Activated naive CD4-positive, alpha-beta T cell treated with anti-CD3 and anti-CD28 coated beads, Interleukin-2, amount 10 ng/mL, durations not matched to agents 7 days and 5 days (primary cell): ENCODE measurements at regions of chr1 and their contacts with region 1.

Region 1: DNA sequence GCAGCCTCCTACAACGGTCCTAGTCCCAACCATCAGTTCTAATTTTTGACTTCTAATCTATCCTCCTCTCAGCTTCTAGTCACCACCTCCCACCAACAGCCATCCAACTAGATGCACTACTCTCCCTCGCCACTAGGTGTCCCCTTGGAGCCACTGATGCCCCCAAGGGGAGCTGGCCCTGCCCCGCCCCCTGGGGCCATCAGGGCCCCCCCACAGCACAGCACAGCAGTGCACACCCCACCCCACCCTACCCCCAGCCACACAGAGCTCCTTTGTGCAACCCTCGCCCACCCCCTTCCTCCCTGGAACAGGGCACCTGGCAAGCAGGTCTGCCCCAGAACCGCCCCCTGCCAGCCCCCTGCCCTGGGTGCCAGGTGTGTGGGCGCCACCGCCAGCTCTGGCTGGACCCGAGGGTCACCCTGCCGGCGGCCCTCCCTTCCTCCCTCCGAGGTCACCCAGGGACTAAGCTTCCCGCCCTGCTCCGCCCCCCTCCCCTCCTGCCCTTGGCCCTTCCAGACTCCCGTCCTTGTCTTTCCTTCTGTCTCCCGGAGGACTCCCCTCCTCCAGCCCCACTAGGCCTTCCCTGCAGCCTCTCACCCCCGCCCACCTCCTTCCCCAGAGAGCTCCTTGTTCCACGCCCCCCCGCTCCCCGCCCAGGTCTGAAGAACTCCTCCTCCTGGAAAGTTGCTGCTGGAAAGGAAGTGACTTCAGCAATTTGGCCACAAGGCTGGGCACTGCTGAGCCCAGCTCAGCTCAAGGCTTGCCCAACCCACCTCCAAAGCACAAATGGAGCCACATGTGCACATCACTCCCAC is 47.0 kb downstream of the AHDC1 start:
- DNase-seq: peak; percentile 83
- H3K4me3 Mint-ChIP-seq: peak overlapping the region; percentile 48
- H3K27ac Mint-ChIP-seq: peak overlapping the region; percentile 84
- H3K4me1 Mint-ChIP-seq: peaks cover 35% of the 10 kb centered on the region
- H3K27me3 Mint-ChIP-seq: no peaks in the 10 kb centered on the region

Region 2: DNA sequence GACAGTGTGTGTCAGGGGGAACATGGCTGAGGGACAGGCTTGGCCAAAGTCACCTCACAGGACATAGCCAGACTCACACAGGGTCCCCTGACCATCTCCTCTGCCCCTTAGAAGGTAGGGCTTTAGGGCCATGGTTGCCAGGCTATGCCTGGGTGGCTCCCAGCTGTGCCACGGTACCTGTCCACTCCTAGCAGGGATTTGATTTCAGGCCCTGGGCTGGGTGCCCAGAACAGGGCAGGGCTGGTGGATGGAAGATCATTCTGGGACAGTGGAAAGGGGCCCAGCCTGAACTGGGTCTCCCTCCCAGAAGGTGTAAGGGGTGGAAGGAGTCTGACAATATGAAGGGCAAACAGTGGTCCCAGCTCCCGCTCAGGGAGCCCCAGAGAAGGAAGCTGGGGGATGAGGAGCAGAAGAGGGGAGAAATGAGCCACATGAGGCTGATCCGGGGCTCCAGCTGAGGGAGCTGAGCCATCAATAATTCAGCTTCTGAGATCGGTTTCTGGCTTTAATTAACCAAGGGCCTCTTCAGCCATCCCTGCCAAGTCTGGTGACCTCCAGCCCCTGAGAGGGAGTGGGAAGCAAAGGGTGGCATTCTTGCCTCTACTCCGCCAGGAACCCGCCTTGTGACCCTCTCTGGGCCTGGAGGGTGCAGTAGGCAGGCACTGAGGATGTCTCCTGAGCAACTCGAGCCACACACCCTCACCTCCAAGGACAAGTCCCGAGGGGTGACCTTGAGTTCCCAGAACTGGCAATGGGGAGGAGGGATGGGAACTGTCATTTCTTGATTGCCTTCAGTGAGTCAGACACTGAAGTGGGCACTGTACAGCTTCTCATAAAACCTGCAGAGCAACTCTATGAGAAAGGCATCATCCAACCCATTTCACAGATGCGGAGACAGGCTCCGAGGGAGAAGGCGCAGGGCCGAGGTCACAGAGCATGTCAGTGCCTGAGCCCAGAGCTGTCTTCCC is 175.9 kb before region 1 on chr1:
- CTCF ChIA-PET with region 1: no interaction called
- DNase-seq: no peak
- H3K4me3 Mint-ChIP-seq: no peak overlapping the region
- H3K27ac Mint-ChIP-seq: no peak overlapping the region
- H3K4me1 Mint-ChIP-seq: no peaks in the 10 kb centered on the region
- H3K27me3 Mint-ChIP-seq: peaks cover 40% of the 10 kb centered on the region

Region 3: GRCh38 chr1:27445177-27445936 is 111.6 kb before region 1 on chr1:
- CTCF ChIA-PET with region 1: no interaction called
- DNase-seq: no peak
- H3K4me3 Mint-ChIP-seq: no peak overlapping the region
- H3K27ac Mint-ChIP-seq: no peak overlapping the region
- H3K4me1 Mint-ChIP-seq: peaks cover 31% of the 10 kb centered on the region
- H3K27me3 Mint-ChIP-seq: no peaks in the 10 kb centered on the region

Region 4: DNA sequence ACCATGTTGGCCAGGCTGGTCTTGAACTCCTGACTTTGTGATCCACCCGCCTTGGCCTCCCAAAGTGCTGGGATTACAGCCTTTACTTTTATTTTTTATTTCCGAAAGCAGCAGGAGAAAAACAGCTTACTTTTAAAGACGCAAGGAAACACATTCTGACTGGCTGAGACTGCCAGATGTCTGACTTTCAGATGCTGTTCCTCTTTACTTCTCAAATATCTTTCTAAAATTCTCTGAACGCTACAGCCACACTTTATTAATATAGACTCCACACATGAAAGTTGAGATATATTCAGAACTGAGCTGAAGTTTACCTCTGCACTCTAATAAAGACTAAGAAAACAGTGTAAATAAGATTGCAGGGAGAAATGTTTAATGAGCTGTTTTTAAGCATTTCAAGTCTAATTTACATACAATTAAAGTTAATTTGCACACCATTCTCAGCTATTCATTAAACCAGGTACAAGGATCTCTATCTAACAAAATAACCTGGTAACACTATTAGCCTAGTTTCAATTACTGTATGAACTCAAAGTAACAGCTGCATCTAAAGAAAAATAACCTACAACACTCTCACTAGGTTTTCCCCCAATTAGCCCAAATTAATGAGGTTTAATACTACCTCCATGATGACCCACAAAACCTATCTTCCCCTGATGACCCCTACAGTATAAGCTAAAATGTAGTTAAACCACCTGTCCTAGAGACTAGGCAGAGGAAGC is 91.9 kb before region 1 on chr1:
- CTCF ChIA-PET with region 1: no interaction called
- DNase-seq: no peak
- H3K4me3 Mint-ChIP-seq: no peak overlapping the region
- H3K27ac Mint-ChIP-seq: no peak overlapping the region
- H3K4me1 Mint-ChIP-seq: peaks cover 19% of the 10 kb centered on the region
- H3K27me3 Mint-ChIP-seq: no peaks in the 10 kb centered on the region

Region 5: DNA sequence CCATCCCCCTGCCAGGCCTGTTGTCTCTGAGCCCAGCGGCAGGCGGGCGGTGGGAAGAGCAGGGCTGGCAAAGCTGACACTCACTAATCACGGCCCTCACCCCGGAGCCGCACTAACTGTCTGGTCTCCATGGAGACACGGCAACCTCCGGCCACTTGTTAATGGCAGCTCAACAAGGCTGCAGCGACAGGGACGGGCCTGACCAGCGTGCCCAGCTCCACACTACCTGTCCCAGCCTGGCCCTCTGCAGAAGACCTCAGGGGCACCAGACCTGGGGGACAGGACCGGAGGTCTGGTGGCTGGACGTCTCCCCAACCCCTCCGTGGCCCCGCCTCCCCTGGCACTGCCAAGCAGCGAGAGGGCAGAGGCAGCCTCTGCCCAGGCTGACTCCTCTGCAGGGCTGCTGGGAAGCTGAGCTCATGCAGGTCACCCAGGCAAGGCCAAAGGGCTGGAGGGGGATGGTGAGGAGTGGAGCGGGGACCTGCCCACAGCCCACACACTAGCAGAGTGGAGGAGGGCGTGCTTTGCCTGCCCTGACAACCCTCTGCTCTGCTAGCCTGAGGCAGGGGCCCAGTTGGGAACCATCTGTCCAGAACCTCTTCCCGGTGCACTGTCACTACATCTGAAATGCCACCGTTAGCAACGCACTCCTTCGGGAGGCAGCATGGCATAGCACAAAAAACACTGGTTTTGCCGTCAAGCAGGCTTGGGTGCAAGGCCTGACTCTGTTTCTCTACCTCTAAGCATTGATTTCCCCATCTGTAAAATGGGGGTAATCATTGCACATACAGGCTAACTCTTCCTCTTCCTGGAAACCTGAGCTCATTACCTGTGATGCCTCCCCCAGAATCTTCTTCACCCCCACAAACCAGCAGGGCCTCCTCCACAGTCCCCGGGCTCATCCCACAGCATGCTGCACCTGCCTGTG is 37.4 kb before region 1 on chr1:
- CTCF ChIA-PET with region 1: interaction called, 35 read pairs
- DNase-seq: no peak
- H3K4me3 Mint-ChIP-seq: no peak overlapping the region
- H3K27ac Mint-ChIP-seq: no peak overlapping the region
- H3K4me1 Mint-ChIP-seq: peaks cover 63% of the 10 kb centered on the region
- H3K27me3 Mint-ChIP-seq: peaks cover 4% of the 10 kb centered on the region

Region 6: GRCh38 chr1:27542408-27543273 is 14.3 kb before region 1 on chr1:
- CTCF ChIA-PET with region 1: interaction called, 10 read pairs
- DNase-seq: no peak
- H3K4me3 Mint-ChIP-seq: no peak overlapping the region
- H3K27ac Mint-ChIP-seq: no peak overlapping the region
- H3K4me1 Mint-ChIP-seq: peaks cover 24% of the 10 kb centered on the region
- H3K27me3 Mint-ChIP-seq: no peaks in the 10 kb centered on the region

Region 7: DNA sequence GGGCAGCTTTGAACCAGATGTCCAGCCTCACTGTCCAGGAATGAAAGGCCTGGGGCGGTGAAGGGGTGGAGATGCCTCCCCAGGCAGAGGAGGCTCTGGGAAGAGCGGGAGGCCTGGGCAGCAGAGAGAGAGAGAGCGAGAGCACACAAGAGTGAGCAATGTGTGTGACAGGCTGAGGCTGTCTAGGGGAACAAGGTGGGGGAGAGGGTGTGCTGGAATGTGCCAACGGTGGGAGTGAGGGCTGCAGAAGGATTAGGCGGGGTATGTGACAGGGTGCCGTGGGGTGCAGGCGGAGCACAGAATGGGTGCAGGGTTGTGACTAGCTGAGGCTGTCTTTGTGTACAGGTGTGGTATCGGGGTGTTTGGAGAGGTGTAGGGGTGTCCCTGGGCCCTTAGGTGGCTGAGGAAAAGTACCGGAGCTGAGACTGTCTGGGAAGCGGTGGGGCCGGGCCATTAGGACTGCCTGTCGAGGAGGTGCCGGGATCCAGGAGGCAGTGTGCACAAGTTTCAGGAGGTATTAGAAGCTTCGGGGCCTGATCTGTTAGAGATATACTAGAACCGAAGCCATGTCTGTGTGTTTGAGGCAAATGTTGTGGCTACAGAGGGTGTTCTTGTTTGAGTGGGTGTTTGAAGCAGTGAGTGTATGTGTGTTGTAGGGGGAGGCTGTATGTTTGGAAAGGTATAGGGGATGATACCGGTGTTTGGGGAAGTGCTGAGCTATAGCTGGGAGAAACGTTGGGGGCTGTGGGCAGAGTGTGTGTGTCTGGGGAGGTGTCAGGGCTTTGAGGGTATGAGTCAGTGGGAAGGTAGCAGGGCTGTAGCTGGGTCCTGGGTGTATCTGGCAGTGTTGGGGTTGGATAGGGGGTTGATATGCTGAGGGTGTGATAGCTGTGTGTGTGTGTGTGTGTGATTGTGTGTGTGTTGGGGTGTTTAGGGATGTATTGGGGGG is 37.8 kb after region 1 on chr1:
- CTCF ChIA-PET with region 1: interaction called, 19 read pairs
- DNase-seq: no peak
- H3K4me3 Mint-ChIP-seq: no peak overlapping the region
- H3K27ac Mint-ChIP-seq: no peak overlapping the region
- H3K4me1 Mint-ChIP-seq: peaks cover 32% of the 10 kb centered on the region
- H3K27me3 Mint-ChIP-seq: peaks cover 2% of the 10 kb centered on the region

Region 8: DNA sequence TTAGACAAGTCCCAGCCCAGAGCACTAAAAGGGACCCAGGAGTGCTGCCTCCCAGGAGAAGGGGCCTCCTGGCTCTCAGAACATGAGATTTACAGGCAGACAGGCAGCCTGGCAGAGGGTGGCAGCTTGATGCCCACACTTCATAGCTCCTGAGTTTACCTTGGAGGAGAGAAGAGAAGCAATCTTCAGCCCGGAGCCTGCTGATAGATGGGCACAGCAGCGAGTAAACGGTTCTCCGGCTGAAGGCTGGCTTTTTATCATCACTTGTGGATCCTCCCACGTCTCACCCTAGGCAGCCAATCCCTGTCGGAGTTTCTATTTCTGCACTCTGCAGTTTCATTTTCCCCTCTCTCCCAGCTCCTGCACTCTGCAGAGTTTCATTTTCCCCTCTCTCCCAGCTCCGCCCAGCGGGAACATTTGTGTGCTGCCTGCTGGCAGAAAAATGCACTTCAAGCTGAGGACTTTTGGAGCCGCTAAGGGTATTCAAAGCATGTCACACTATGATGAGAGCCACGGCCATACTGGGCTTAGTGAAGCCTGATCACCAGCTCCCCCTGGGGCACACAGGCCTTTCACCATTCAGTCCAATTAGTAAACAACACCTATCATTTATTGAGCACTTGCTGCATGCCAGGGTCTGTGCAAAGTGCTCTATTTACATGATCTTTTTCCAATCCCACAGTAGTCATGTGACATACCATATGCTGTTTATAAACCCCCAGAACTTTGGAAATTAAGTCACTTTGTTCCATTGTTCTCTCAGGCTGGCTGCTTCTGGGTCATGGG is 115.2 kb after region 1 on chr1 and contains the start of gene IFI6:
- CTCF ChIA-PET with region 1: interaction called, 14 read pairs
- DNase-seq: peak; percentile 91
- H3K4me3 Mint-ChIP-seq: peak within 1 kb of the TSS; percentile 88
- H3K27ac Mint-ChIP-seq: peak within 1 kb of the TSS; percentile 95
- H3K4me1 Mint-ChIP-seq: peaks cover 43% of the 10 kb centered on the region
- H3K27me3 Mint-ChIP-seq: no peaks in the 10 kb centered on the region

Region 9: DNA sequence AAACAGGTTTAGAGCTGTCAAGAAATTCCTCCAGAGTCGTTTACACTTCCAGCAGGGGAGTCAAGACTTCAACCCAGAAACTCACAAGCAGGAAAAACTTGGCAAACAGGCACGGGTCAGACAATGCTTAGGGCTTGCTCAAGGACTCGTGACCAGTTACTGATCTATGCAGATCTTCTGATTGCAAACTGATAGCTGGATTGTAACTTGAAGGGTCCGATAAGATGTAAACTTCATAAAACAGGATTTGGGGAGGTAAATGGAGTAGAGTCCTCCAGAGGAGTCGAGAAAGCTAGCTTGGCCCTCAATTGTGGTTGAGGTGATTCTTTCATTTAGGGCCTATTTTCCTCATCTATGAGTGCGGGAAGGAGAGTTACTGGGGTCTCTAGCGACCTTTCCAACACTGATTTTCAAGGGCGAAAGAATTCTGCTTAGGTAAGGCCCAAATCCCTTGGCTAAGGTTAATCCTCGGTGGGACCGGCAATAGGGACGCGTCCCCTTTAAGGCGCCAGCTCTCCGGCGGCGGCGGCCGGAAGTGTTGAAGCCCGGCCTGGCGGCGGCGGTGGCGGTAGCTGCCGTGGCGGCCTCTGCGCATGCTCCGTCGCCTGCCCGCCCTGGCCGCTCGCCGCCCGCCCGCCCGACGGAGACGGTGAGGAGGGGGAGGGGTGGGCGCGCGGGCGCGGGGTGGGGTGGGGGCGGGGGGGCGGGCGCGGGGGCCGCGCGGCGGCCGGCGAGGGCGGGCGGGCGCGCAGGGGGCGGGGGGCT is 1111.4 kb after region 1 on chr1 and contains the start of gene GMEB1:
- CTCF ChIA-PET with region 1: no interaction called
- DNase-seq: peak; percentile 90
- H3K4me3 Mint-ChIP-seq: peak within 1 kb of the TSS; percentile 96
- H3K27ac Mint-ChIP-seq: peak within 1 kb of the TSS; percentile 99
- H3K4me1 Mint-ChIP-seq: peaks cover 23% of the 10 kb centered on the region
- H3K27me3 Mint-ChIP-seq: no peaks in the 10 kb centered on the region